Naive thymus-derived CD8-positive, alpha-beta T cell (primary cell): ENCODE measurements at regions of chr5 and their contacts with region 1.

Region 1: GRCh38 chr5:98928873-98929696 is at the start of gene CHD1:
- DNase-seq: peak; percentile 92 to 98 (median 96)
- ATAC-seq: peak; percentile 54 to 59
- H3K4me3 Mint-ChIP-seq: peak within 1 kb of the TSS; percentile 82 to 99 (median 97)
- H3K27ac Mint-ChIP-seq: peak within 1 kb of the TSS; percentile 98 to 100 (median 100)
- H3K4me1 Mint-ChIP-seq: peaks cover 17 to 81% (median 60%) of the 10 kb centered on the region in 4 donors
- H3K27me3 Mint-ChIP-seq: peaks cover 0 to 5% (median 0%) of the 10 kb centered on the region in 5 donors
- polyA plus RNA-seq, gene CHD1: 8.6 to 9.4 (median 9.0) TPM

Region 2: DNA sequence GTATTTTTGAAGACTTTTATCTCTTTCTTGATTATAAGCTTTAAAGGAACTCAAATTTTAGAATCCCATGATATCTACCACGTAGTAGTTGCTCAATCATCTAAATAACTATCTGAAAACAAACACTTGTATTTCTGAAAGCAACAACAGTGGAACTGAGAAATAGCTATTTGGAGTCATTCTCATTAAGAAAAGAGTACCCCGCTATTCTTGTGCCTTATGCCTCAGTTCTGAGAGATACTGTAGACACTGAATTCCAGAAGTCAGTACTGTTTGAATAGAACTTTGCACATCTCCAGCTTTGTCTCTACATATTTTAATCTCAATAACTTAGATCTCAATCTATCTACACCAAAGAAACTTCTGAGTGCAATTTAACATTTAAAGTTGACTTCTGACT is 11.7 kb before region 1 on chr5:
- POLR2A ChIA-PET with region 1: interaction called, 16 read pairs
- DNase-seq: no peak
- ATAC-seq: no peak
- H3K4me3 Mint-ChIP-seq: peak overlapping the region in 7 of 10 donors; percentile 2 to 54 (median 33)
- H3K27ac Mint-ChIP-seq: peak overlapping the region in 3 of 10 donors; percentile 7 to 28 (median 18)
- H3K4me1 Mint-ChIP-seq: peaks cover 28 to 79% (median 78%) of the 10 kb centered on the region in 4 donors
- H3K27me3 Mint-ChIP-seq: no peaks in the 10 kb centered on the region

Region 3: GRCh38 chr5:99004960-99005359 is 75.9 kb after region 1 on chr5:
- POLR2A ChIA-PET with region 1: interaction called, 14 read pairs
- DNase-seq: peak in 4 of 10 donors; percentile 13 to 52 (median 27)
- ATAC-seq: peak; percentile 99
- H3K4me3 Mint-ChIP-seq: no peak overlapping the region
- H3K27ac Mint-ChIP-seq: peak overlapping the region in 4 of 10 donors; percentile 7 to 55 (median 18)
- H3K4me1 Mint-ChIP-seq: peaks cover 6 to 32% (median 14%) of the 10 kb centered on the region in 4 donors
- H3K27me3 Mint-ChIP-seq: no peaks in the 10 kb centered on the region

Region 4: GRCh38 chr5:99032234-99033013 is 103.3 kb after region 1 on chr5:
- POLR2A ChIA-PET with region 1: interaction called, 103 read pairs
- DNase-seq: peak in 3 of 10 donors; percentile 14 to 29 (median 21)
- ATAC-seq: peak; percentile 19 to 45
- H3K4me3 Mint-ChIP-seq: peak overlapping the region; percentile 76 to 95 (median 88)
- H3K27ac Mint-ChIP-seq: peak overlapping the region; percentile 84 to 98 (median 94)
- H3K4me1 Mint-ChIP-seq: peaks cover 29 to 82% (median 60%) of the 10 kb centered on the region in 4 donors
- H3K27me3 Mint-ChIP-seq: no peaks in the 10 kb centered on the region

Region 5: GRCh38 chr5:99060306-99061261 is 131.5 kb after region 1 on chr5:
- POLR2A ChIA-PET with region 1: interaction called, 49 read pairs
- DNase-seq: peak; percentile 68 to 90 (median 84)
- ATAC-seq: peak; percentile 77 to 78
- H3K4me3 Mint-ChIP-seq: peak overlapping the region in 6 of 10 donors; percentile 10 to 42 (median 32)
- H3K27ac Mint-ChIP-seq: peak overlapping the region in 2 of 10 donors; percentile 4 to 22
- H3K4me1 Mint-ChIP-seq: peaks cover 2 to 35% (median 15%) of the 10 kb centered on the region in 4 donors
- H3K27me3 Mint-ChIP-seq: peaks cover 0 to 11% (median 3%) of the 10 kb centered on the region in 5 donors